Aorta (tissue), 5 donors: ENCODE measurements at regions of chr1 and their contacts with region 1.

Region 1: GRCh38 chr1:41416552-41417334 is 55.5 kb downstream of the FOXO6 start:
- DNase-seq: peak; percentile 80 to 86
- ATAC-seq: peak; percentile 75
- H3K4me3 ChIP-seq: no peak overlapping the region
- H3K27ac ChIP-seq: no peak overlapping the region
- H3K4me1 ChIP-seq: no peaks in the 10 kb centered on the region
- H3K27me3 ChIP-seq: no peaks in the 10 kb centered on the region

Region 2: DNA sequence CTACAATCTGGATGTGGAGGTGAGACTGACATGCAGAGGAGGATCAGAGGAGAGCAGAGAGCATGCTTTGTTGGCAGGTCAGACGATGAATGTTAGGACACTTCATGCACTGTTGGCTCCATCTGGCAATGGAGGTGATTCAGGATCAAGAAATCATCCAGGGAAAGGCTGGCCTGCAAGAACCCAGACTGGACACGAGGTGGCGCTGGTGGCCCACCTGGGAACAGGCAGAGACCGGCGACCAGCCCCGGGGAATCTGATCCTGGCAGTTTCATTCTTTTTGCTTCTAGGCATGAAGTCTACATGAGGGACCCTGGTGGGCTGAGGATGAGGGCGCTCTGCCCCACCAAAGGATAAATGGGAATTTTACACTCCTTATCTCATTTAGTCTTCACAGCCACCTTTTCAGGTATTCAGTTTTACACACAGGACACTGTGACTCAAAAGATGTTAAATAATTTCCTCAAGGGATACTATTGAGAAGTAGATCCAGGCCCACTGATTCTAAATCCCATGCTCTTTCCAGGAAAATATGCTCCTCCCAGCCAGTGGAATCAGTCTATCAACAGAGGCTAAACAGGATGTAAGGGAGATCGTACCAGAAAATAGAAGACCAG is 148.5 kb before region 1 on chr1:
- intact Hi-C with region 1: loop called (anchors 1 to 2 kb)
- DNase-seq: peak; percentile 82 to 89
- ATAC-seq: peak; percentile 90
- H3K4me3 ChIP-seq: no peak overlapping the region
- H3K27ac ChIP-seq: no peak overlapping the region
- H3K4me1 ChIP-seq: no peaks in the 10 kb centered on the region
- H3K27me3 ChIP-seq: no peaks in the 10 kb centered on the region

Region 3: GRCh38 chr1:41282679-41283317 is 133.9 kb before region 1 on chr1:
- intact Hi-C with region 1: loop called (anchors 2 to 5 kb)
- DNase-seq: peak in 1 of 2 donors; percentile 80
- ATAC-seq: peak; percentile 76
- H3K4me3 ChIP-seq: no peak overlapping the region
- H3K27ac ChIP-seq: no peak overlapping the region
- H3K4me1 ChIP-seq: no peaks in the 10 kb centered on the region
- H3K27me3 ChIP-seq: no peaks in the 10 kb centered on the region

Region 4: GRCh38 chr1:42013881-42014470 is 597.2 kb after region 1 on chr1:
- intact Hi-C with region 1: no loop called
- DNase-seq: no peak
- ATAC-seq: no peak
- H3K4me3 ChIP-seq: no peak overlapping the region
- H3K27ac ChIP-seq: no peak overlapping the region
- H3K4me1 ChIP-seq: no peaks in the 10 kb centered on the region
- H3K27me3 ChIP-seq: no peaks in the 10 kb centered on the region